Heart right ventricle (tissue), 16 donors: ENCODE measurements at regions of chr1 and their contacts with region 1.

Region 1: GRCh38 chr1:61724813-61725694 is at the start of gene TM2D1:
- DNase-seq: peak; percentile 89
- ATAC-seq: peak; percentile 98 to 100 (median 99)
- H3K4me3 ChIP-seq: peak within 1 kb of the TSS; percentile 75 to 97 (median 80)
- H3K27ac ChIP-seq: peak within 1 kb of the TSS; percentile 77 to 98 (median 91)
- H3K4me1 ChIP-seq: peaks cover 5 to 30% (median 20%) of the 10 kb centered on the region in 9 donors
- H3K27me3 ChIP-seq: no peaks in the 10 kb centered on the region
- CTCF ChIP-seq: no peak
- total RNA-seq, gene TM2D1: 29.4 to 44.7 (median 36.8) TPM

Region 2: GRCh38 chr1:61692155-61692800 is 32.8 kb before region 1 on chr1:
- intact Hi-C with region 1: no loop called
- DNase-seq: no peak
- ATAC-seq: no peak
- H3K4me3 ChIP-seq: no peak overlapping the region
- H3K27ac ChIP-seq: peak overlapping the region in 2 of 10 donors; percentile 11 to 13
- H3K4me1 ChIP-seq: no peaks in the 10 kb centered on the region
- H3K27me3 ChIP-seq: no peaks in the 10 kb centered on the region
- CTCF ChIP-seq: no peak

Region 3: GRCh38 chr1:61741711-61742619 is 16.9 kb after region 1 on chr1 and contains the start of gene PATJ:
- intact Hi-C with region 1: loop called in 2 of 10 experiments (anchors 2 kb)
- DNase-seq: peak; percentile 47 to 57
- ATAC-seq: peak; percentile 59 to 84 (median 75)
- H3K4me3 ChIP-seq: peak within 1 kb of the TSS; percentile 82 to 99 (median 93)
- H3K27ac ChIP-seq: peak within 1 kb of the TSS; percentile 90 to 99 (median 98)
- H3K4me1 ChIP-seq: peaks cover 0 to 22% (median 13%) of the 10 kb centered on the region in 9 donors
- H3K27me3 ChIP-seq: peaks cover 0 to 3% (median 0%) of the 10 kb centered on the region in 7 donors
- CTCF ChIP-seq: no peak
- total RNA-seq, gene PATJ: 74.1 to 213 (median 145) TPM

Region 4: DNA sequence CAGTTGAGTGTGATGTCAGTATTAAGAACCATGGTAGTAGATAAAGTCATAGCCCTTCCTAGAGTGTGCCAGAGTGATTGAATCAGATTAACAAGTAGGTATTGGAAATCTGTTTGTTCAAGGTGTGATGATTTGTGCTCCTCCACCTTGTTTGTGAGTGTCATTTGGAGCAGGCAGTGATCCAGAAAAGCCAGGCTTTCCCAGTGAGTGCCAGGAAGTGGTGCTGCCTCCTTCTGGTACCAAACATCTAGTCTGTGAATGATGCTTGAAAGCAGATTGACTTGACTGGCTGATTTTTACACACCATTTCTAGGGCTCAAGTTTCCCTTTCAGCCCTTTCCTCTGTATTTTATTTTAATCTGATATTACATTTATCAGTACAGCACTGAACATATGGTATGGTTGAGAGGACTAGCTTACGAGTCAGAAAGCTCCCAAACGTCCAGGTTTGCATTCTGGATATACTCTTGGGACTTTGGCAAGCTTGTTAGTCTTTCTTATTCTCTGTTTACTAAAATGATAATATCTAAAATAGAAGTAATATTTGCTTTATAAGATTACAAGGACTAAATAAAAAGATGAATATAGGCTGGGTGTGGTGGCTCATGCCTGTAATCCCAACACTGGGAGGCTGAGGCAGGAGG is 117.9 kb after region 1 on chr1:
- intact Hi-C with region 1: loop called in 2 of 10 experiments (anchors 10 kb)
- DNase-seq: no peak
- ATAC-seq: no peak
- H3K4me3 ChIP-seq: no peak overlapping the region
- H3K27ac ChIP-seq: no peak overlapping the region
- H3K4me1 ChIP-seq: peaks cover 0 to 17% (median 7%) of the 10 kb centered on the region in 9 donors
- H3K27me3 ChIP-seq: no peaks in the 10 kb centered on the region
- CTCF ChIP-seq: peak in 7 of 9 donors; percentile 12 to 37 (median 28)